Caco-2 (cell line): ENCODE measurements at regions of chr1 and their contacts with region 1.

Region 1: GRCh38 chr1:86515597-86515996 is 31.3 kb upstream of the CLCA4 start:
- DNase-seq: peak; percentile 58 to 69
- H3K4me3 ChIP-seq: no peak overlapping the region
- H3K4me3 Mint-ChIP-seq: no peak overlapping the region
- H3K27ac Mint-ChIP-seq: no peak overlapping the region
- H3K4me1 ChIP-seq: peaks cover 36% of the 10 kb centered on the region
- H3K4me1 Mint-ChIP-seq: peaks cover 14% of the 10 kb centered on the region
- H3K27me3 ChIP-seq: no peaks in the 10 kb centered on the region
- H3K27me3 Mint-ChIP-seq: no peaks in the 10 kb centered on the region
- CTCF ChIP-seq: peak; percentile 35 to 64

Region 2: GRCh38 chr1:86450847-86451246 is 64.8 kb before region 1 on chr1:
- CTCF ChIA-PET with region 1: no interaction called
- POLR2A ChIA-PET with region 1: no interaction called
- intact Hi-C with region 1: no loop called
- DNase-seq: no peak
- H3K4me3 ChIP-seq: no peak overlapping the region
- H3K4me3 Mint-ChIP-seq: no peak overlapping the region
- H3K27ac Mint-ChIP-seq: no peak overlapping the region
- H3K4me1 ChIP-seq: no peaks in the 10 kb centered on the region
- H3K4me1 Mint-ChIP-seq: no peaks in the 10 kb centered on the region
- H3K27me3 ChIP-seq: no peaks in the 10 kb centered on the region
- H3K27me3 Mint-ChIP-seq: peaks cover 4% of the 10 kb centered on the region
- CTCF ChIP-seq: no peak

Region 3: DNA sequence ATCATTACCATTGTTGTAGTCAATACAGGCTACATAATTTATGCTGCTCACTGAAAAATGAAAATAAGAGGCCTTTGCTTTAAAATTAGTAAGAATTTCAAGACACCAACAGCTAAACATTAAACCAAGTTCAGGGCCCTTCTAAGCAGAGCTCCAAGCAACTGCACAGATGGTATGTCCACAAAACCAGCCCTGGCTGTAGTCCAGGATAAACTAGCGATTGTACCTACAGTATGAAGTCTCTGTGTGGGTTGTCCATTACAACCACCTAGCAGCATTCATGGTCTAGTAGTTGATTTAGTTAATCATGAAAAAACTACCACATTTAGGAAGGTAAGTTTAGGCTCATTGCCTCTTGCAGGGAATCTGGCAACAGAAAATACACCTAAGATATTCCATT is 66.6 kb after region 1 on chr1:
- CTCF ChIA-PET with region 1: no interaction called
- POLR2A ChIA-PET with region 1: no interaction called
- intact Hi-C with region 1: loop called (anchors 2 kb)
- DNase-seq: no peak
- H3K4me3 ChIP-seq: no peak overlapping the region
- H3K4me3 Mint-ChIP-seq: no peak overlapping the region
- H3K27ac Mint-ChIP-seq: peak overlapping the region; percentile 58
- H3K4me1 ChIP-seq: peaks cover 25% of the 10 kb centered on the region
- H3K4me1 Mint-ChIP-seq: peaks cover 16% of the 10 kb centered on the region
- H3K27me3 ChIP-seq: no peaks in the 10 kb centered on the region
- H3K27me3 Mint-ChIP-seq: no peaks in the 10 kb centered on the region
- CTCF ChIP-seq: no peak

Region 4: DNA sequence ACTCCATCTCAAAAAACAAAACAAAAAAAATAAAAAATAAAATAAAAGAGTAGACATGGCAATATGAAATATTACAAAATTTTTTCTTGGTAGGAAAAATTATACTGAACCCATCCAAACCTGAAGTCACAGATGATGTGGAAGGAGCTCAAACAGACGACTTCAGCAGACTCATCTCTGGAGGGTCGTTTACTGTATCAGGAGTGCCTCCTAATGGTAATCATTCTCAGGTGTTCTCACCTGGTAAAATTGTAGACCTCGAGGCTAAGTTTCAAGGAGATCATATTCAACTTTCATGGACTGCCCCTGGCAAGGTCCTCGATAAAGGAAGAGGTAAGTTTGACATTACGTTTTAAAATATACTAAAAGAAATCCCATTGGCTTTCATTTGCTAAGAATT is 134.5 kb after region 1 on chr1:
- CTCF ChIA-PET with region 1: interaction called, 8 read pairs
- POLR2A ChIA-PET with region 1: no interaction called
- intact Hi-C with region 1: loop called (anchors 1 kb)
- DNase-seq: peak in 1 of 2 experiments; percentile 9
- H3K4me3 ChIP-seq: no peak overlapping the region
- H3K4me3 Mint-ChIP-seq: no peak overlapping the region
- H3K27ac Mint-ChIP-seq: no peak overlapping the region
- H3K4me1 ChIP-seq: no peaks in the 10 kb centered on the region
- H3K4me1 Mint-ChIP-seq: peaks cover 4% of the 10 kb centered on the region
- H3K27me3 ChIP-seq: no peaks in the 10 kb centered on the region
- H3K27me3 Mint-ChIP-seq: no peaks in the 10 kb centered on the region
- CTCF ChIP-seq: peak in 1 of 2 experiments; percentile 17

Region 5: GRCh38 chr1:86666368-86666767 is 150.8 kb after region 1 on chr1:
- CTCF ChIA-PET with region 1: no interaction called
- POLR2A ChIA-PET with region 1: no interaction called
- intact Hi-C with region 1: no loop called
- DNase-seq: no peak
- H3K4me3 ChIP-seq: no peak overlapping the region
- H3K4me3 Mint-ChIP-seq: no peak overlapping the region
- H3K27ac Mint-ChIP-seq: no peak overlapping the region
- H3K4me1 ChIP-seq: no peaks in the 10 kb centered on the region
- H3K4me1 Mint-ChIP-seq: peaks cover 11% of the 10 kb centered on the region
- H3K27me3 ChIP-seq: no peaks in the 10 kb centered on the region
- H3K27me3 Mint-ChIP-seq: no peaks in the 10 kb centered on the region
- CTCF ChIP-seq: no peak

Region 6: DNA sequence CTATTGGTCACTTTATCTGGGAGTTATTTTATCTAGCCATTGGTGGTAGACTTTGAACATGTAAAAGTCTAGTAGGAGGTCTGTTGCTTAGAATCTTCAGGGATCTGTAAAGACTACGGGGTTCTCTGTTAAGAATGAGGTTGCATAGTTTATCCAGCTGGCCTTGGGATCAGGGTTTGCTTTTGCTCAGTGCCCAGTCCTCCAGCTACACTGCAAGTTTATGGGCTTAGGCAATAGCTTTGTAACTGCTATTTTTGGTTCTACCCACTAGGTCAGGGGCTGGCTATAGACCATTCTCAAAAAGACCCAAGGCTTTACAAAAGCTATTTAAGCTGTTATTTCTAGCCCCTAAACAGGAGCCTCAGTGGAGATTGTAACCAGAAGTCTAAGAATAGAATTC is 198.6 kb after region 1 on chr1:
- CTCF ChIA-PET with region 1: no interaction called
- POLR2A ChIA-PET with region 1: no interaction called
- intact Hi-C with region 1: no loop called
- DNase-seq: no peak
- H3K4me3 ChIP-seq: no peak overlapping the region
- H3K4me3 Mint-ChIP-seq: no peak overlapping the region
- H3K27ac Mint-ChIP-seq: no peak overlapping the region
- H3K4me1 ChIP-seq: peaks cover 8% of the 10 kb centered on the region
- H3K4me1 Mint-ChIP-seq: peaks cover 7% of the 10 kb centered on the region
- H3K27me3 ChIP-seq: no peaks in the 10 kb centered on the region
- H3K27me3 Mint-ChIP-seq: no peaks in the 10 kb centered on the region
- CTCF ChIP-seq: no peak